Tibial artery (tissue), 4 donors: ENCODE measurements at regions of chr9 and their contacts with region 1.

Region 1: GRCh38 chr9:37943329-37944265 is 39.7 kb upstream of the SLC25A51 start:
- DNase-seq: no peak
- H3K4me3 ChIP-seq: no peak overlapping the region
- H3K27ac ChIP-seq: peak overlapping the region; percentile 18 to 58
- H3K4me1 ChIP-seq: peaks cover 9 to 62% (median 48%) of the 10 kb centered on the region in 4 donors
- H3K27me3 ChIP-seq: no peaks in the 10 kb centered on the region
- CTCF ChIP-seq: no peak

Region 2: DNA sequence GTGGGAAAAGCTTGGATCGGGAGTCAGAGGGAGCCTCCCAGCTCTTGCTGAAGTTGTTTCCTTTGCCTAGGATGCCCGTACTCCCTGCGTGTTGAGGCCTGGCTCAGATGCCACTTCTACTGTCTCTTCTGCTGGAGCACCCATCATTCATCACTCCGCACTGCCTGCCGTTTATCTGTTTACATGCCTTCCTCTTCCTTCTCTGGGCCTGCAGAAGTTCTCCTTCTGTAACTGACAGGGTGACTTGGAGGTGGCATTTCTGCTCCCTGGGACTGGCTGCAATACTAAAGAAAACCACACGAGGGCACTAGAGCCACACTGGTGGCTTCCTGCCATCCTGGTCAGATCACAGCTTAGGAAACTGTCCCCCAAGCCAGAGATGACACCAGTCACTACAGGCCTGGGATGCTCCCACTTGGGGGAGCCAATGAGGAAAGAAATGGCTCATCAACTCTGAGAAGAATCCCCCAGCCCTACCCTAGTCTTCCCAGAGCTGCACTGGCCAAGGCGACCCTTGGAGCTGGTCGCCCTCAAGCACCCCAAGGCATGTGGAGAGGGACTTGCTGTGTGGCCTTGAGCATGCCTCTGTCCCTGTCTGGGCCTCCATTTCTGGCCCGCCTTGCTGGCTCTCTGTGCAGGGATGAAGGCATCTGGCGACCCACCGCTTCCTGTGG is 30.0 kb before region 1 on chr9:
- intact Hi-C with region 1: no loop called
- DNase-seq: peak; percentile 75 to 88
- H3K4me3 ChIP-seq: no peak overlapping the region
- H3K27ac ChIP-seq: no peak overlapping the region
- H3K4me1 ChIP-seq: no peaks in the 10 kb centered on the region
- H3K27me3 ChIP-seq: no peaks in the 10 kb centered on the region
- CTCF ChIP-seq: peak; percentile 95 to 98

Region 3: DNA sequence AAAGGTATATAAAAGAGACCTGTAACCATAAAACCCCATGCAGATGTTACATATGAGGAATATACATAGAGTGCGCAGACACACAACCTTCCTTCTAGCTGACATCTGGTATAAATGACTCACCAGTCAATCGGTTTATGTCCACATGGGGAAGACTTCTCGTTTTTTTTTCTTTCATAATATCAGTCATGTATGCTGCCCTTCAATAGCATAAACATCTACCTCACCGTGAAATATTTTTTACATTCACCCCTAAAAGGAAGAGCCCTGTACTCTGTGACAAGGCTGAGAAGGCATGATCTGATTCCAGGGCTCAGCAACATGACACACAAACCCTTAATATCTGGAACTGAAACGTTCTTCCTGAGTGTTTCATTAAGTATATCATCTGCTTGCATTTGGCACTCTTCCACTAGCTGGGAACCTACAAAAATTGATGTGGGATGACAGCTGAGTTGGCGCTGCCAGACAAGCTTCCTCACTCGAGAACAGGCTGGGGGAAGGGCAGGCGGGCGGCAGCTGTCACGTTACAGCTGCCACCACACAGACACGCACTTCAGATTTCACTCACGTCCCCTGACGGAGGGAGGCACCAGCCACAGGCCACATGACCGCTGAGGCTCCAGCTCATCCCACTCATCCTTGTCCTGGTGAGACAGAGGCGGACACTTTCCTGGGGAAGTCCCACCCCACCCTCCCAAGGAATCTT is 51.2 kb after region 1 on chr9:
- intact Hi-C with region 1: loop called (anchors 10 kb)
- DNase-seq: peak; percentile 80 to 88
- H3K4me3 ChIP-seq: peak overlapping the region in 1 of 2 donors; percentile 1
- H3K27ac ChIP-seq: peak overlapping the region; percentile 57
- H3K4me1 ChIP-seq: peaks cover 0 to 56% (median 18%) of the 10 kb centered on the region in 4 donors
- H3K27me3 ChIP-seq: no peaks in the 10 kb centered on the region
- CTCF ChIP-seq: no peak